Activated CD4-positive, alpha-beta T cell treated with anti-CD3 and anti-CD28 coated beads, Interleukin-2, amount 10 ng/mL, durations not matched to agents 24 days and 14 days (primary cell): ENCODE measurements at regions of chr1 and their contacts with region 1.

Region 1: GRCh38 chr1:159071970-159072582 is 4.5 kb downstream of the AIM2 start:
- DNase-seq: peak; percentile 69
- H3K4me3 Mint-ChIP-seq: peak overlapping the region; percentile 49
- H3K27ac Mint-ChIP-seq: peak overlapping the region; percentile 58
- H3K4me1 Mint-ChIP-seq: peaks cover 35% of the 10 kb centered on the region
- H3K27me3 Mint-ChIP-seq: peaks cover 1% of the 10 kb centered on the region

Region 2: GRCh38 chr1:158285756-158286241 is 786.3 kb before region 1 on chr1:
- intact Hi-C with region 1: loop called (anchors 10 kb)
- DNase-seq: no peak
- H3K4me3 Mint-ChIP-seq: peak overlapping the region; percentile 34
- H3K27ac Mint-ChIP-seq: peak overlapping the region; percentile 82
- H3K4me1 Mint-ChIP-seq: peaks cover 15% of the 10 kb centered on the region
- H3K27me3 Mint-ChIP-seq: no peaks in the 10 kb centered on the region

Region 3: DNA sequence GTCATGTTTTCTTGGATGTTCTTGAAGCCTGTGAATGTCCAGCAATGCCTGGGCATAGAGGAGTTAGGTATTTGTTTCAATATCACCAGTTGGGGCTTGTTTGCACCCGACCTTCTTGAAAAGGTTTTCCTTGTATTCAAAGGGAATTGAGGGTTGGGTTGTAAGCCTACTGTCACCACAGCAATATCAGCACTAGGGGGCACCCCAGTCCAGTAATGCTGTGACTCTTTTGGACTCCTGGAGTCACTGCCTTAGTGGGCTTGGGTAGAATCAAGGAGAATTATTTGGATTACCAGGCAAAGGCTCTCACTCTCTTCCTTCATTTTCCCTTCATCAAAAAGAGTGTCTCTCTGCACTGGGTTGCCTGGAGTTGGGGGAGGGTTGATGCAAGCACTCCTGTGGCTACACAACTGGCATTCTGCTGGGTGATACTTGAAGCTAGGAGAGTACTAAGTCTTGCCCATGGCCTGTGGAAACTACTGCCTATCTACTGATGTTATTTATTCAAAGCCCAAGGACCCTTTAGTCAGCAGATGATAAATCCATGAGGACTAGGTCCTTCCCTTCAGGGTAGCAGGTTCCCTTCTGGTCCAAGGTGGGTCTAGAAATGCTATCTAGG is 565.6 kb before region 1 on chr1:
- intact Hi-C with region 1: loop called (anchors 1 kb)
- DNase-seq: peak; percentile 83
- H3K4me3 Mint-ChIP-seq: no peak overlapping the region
- H3K27ac Mint-ChIP-seq: no peak overlapping the region
- H3K4me1 Mint-ChIP-seq: no peaks in the 10 kb centered on the region
- H3K27me3 Mint-ChIP-seq: peaks cover 32% of the 10 kb centered on the region

Region 4: GRCh38 chr1:159055181-159055641 is 16.9 kb before region 1 on chr1:
- intact Hi-C with region 1: loop called (anchors 2 kb)
- DNase-seq: no peak
- H3K4me3 Mint-ChIP-seq: no peak overlapping the region
- H3K27ac Mint-ChIP-seq: peak overlapping the region; percentile 80
- H3K4me1 Mint-ChIP-seq: peaks cover 37% of the 10 kb centered on the region
- H3K27me3 Mint-ChIP-seq: no peaks in the 10 kb centered on the region

Region 5: GRCh38 chr1:159436469-159436868 is 364.4 kb after region 1 on chr1:
- intact Hi-C with region 1: no loop called
- DNase-seq: no peak
- H3K4me3 Mint-ChIP-seq: no peak overlapping the region
- H3K27ac Mint-ChIP-seq: no peak overlapping the region
- H3K4me1 Mint-ChIP-seq: no peaks in the 10 kb centered on the region
- H3K27me3 Mint-ChIP-seq: no peaks in the 10 kb centered on the region